ENCODE measurements at regions of chr2 and their contacts with region 1.

Region 1: DNA sequence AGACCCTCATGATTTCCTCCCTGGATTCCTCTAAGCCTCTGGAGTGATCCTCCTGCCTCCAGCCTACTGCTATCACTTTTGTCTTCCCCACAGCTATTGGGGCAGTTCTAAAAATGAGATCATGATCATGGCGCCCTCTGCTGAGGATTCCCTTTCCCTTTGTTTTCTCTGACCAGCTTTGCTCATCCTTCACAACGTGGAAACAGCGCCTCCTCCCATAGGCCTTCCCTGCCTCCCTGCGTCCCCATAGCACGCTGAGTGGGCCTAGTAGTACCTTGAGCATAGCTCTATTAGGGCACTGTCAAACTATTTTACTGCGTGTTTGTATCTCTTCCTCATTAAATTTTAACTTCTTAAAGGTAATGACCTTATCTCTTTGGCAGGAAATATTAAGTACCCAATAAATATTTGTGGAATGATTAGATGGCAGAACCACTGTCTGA is 207.0 kb upstream of the FANCL start:
- DNase-seq: peak; percentile 20 to 95 (median 83)

Region 2: DNA sequence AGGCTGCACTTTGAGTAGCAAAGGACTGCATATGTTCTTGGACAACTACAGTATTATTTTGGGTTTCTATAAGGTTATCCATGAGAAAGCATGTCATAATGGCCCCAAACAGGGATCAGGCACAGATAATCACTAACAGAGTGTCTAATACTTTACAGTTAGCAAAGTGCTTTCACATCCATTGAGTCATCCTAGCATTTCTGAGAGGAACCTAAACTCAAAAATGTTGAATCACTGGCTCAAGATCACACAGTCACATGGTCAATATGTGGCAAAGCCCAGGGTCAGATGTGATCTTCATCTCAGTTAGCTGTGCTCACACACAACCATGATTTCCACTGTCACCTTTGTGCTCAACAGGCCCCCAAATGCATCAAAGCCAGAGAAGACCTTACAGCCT is 557.6 kb before region 1 on chr2:
- intact Hi-C with region 1: loop called (anchors 10 kb)
- DNase-seq: no peak

Region 3: GRCh38 chr2:58131191-58132011 is 316.7 kb before region 1 on chr2:
- intact Hi-C with region 1: loop called (anchors 5 kb)
- DNase-seq: peak in 7 of 42 donors; percentile 3 to 47 (median 28)

Region 4: DNA sequence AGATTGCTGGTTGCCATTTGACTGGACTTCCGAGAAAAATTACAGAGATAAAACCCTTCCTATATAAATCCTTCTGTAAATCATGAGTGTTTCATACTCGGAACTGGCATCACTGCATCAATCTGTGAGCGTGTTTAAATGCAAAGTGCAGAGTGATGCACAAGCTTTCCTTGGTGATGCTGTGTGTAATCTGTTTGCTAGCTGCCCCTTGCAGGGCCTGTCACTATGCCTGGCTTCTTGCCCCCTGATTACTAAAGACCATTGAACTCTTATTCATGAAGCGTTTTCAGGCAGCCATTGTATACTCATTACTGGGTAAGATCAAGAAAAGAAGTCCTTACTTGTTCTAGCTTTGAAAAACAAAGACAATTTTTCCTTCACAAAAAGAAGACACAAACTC is 59.9 kb after region 1 on chr2:
- intact Hi-C with region 1: no loop called
- DNase-seq: peak in 24 of 42 donors; percentile 17 to 72 (median 46)

Measured in head of caudate nucleus (tissue), 42 donors.